Activated CD4-positive, alpha-beta memory T cell treated with anti-CD3 and anti-CD28 coated beads, Interleukin-2, amount 10 ng/mL, durations not matched to agents 7 days and 5 days (primary cell): ENCODE measurements at regions of chr16 and their contacts with region 1.

Region 1: DNA sequence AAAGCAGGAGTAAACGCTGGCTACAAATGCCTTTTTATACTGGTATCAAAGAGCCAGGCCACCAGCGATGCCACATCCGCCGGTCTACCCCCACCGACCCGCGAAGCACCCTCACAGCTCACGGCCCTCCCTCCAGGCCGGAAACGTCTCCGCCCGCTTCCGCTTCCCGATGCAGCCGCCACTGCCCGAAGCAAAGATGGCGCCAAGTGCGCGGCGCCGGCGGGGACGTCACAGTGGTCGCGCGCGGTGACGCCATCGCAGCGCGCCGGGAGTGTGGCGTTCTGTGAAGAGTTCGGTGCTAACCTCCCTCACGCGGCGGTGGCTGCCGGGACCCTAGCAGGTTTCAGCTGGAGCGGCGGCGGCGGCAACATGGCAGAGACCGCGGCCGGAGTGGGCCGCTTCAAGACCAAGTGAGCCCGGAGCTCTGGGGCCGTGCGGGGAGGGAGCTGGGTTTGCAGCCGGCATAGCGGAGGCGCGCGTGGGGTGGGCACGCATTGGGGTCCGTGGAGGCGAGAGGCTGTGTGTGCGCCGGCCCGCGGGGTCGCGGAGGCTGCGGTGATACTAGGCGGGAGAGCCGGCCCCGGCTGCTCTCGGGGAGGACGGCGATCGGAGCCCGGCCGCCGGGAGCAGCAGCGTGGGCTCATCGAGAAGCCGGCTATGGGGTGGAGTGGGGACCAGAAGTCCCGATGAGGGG is at the start of gene TBL3:
- DNase-seq: peak; percentile 98
- H3K4me3 Mint-ChIP-seq: peak within 1 kb of the TSS; percentile 90
- H3K27ac Mint-ChIP-seq: peak within 1 kb of the TSS; percentile 95
- H3K4me1 Mint-ChIP-seq: peaks cover 34% of the 10 kb centered on the region
- H3K27me3 Mint-ChIP-seq: no peaks in the 10 kb centered on the region
- total RNA-seq, gene TBL3: 27.7 to 28.7 TPM

Region 2: GRCh38 chr16:1959269-1960049 is 12.5 kb before region 1 on chr16 and contains the start of gene NDUFB10:
- CTCF ChIA-PET with region 1: interaction called, 3 read pairs
- POLR2A ChIA-PET with region 1: interaction called, 149 read pairs
- DNase-seq: peak; percentile 93
- H3K4me3 Mint-ChIP-seq: peak within 1 kb of the TSS; percentile 84
- H3K27ac Mint-ChIP-seq: peak within 1 kb of the TSS; percentile 95
- H3K4me1 Mint-ChIP-seq: peaks cover 43% of the 10 kb centered on the region
- H3K27me3 Mint-ChIP-seq: peaks cover 2% of the 10 kb centered on the region
- total RNA-seq, gene NDUFB10: 131 to 138 TPM

Region 3: DNA sequence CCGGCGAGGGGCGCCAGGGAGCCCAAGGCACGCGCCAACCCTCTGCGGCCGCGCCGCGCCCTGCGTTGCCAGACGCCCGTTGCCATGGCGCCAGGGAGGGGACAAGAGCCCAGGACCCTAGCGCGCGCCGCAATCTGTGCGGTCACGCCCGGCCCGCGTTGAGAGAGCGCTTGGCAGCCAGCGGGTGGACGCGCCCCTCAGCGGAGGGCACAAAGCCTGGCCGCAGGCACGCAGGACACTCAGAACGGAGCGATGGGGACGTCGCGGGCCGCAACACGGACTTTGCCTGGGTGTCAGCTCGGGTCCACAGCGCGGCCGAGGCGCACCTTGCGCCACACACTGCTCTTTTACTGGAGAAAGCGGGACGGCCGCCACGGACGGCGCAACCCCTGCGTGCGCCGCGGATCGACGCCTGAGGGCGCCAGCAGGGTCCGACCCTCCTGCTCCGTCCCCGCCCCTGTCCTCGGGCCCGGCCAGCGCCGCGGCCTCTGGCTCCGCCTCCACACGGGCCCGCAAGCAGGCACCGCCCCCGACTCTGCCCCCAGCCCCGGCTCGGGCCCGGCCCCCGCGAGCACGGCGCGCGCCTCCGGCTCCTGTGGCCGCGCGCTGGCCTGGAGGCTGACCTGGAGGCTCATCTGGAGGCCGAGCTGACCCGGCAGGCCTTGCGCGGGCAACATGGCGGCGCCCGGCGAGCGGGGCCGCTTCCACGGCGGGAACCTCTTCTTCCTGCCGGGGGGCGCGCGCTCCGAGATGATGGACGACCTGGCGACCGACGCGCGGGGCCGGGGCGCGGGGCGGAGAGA is 11.8 kb after region 1 on chr16 and contains the start of gene GFER:
- CTCF ChIA-PET with region 1: interaction called, 6 read pairs
- POLR2A ChIA-PET with region 1: interaction called, 149 read pairs
- DNase-seq: peak; percentile 83
- H3K4me3 Mint-ChIP-seq: peak within 1 kb of the TSS; percentile 80
- H3K27ac Mint-ChIP-seq: peak within 1 kb of the TSS; percentile 32
- H3K4me1 Mint-ChIP-seq: peaks cover 24% of the 10 kb centered on the region
- H3K27me3 Mint-ChIP-seq: peaks cover 32% of the 10 kb centered on the region
- total RNA-seq, gene GFER: 29.1 to 32.0 TPM

Region 4: GRCh38 chr16:1991948-1992703 is 20.2 kb after region 1 on chr16:
- CTCF ChIA-PET with region 1: interaction called, 3 read pairs
- POLR2A ChIA-PET with region 1: interaction called, 149 read pairs
- DNase-seq: peak; percentile 98
- H3K4me3 Mint-ChIP-seq: peak overlapping the region; percentile 73
- H3K27ac Mint-ChIP-seq: peak overlapping the region; percentile 35
- H3K4me1 Mint-ChIP-seq: peaks cover 37% of the 10 kb centered on the region
- H3K27me3 Mint-ChIP-seq: peaks cover 14% of the 10 kb centered on the region

Region 5: GRCh38 chr16:2009789-2010510 is 38.0 kb after region 1 on chr16 and contains the start of gene ZNF598:
- CTCF ChIA-PET with region 1: interaction called, 8 read pairs
- POLR2A ChIA-PET with region 1: interaction called, 15 read pairs
- DNase-seq: peak; percentile 83
- H3K4me3 Mint-ChIP-seq: peak within 1 kb of the TSS; percentile 92
- H3K27ac Mint-ChIP-seq: peak within 1 kb of the TSS; percentile 88
- H3K4me1 Mint-ChIP-seq: peaks cover 41% of the 10 kb centered on the region
- H3K27me3 Mint-ChIP-seq: no peaks in the 10 kb centered on the region
- total RNA-seq, gene ZNF598: 52.1 to 53.6 TPM